Activated CD4-positive, alpha-beta memory T cell treated with anti-CD3 and anti-CD28 coated beads for 36 hours (primary cell): ENCODE measurements at regions of chr15 and their contacts with region 1.

Region 1: DNA sequence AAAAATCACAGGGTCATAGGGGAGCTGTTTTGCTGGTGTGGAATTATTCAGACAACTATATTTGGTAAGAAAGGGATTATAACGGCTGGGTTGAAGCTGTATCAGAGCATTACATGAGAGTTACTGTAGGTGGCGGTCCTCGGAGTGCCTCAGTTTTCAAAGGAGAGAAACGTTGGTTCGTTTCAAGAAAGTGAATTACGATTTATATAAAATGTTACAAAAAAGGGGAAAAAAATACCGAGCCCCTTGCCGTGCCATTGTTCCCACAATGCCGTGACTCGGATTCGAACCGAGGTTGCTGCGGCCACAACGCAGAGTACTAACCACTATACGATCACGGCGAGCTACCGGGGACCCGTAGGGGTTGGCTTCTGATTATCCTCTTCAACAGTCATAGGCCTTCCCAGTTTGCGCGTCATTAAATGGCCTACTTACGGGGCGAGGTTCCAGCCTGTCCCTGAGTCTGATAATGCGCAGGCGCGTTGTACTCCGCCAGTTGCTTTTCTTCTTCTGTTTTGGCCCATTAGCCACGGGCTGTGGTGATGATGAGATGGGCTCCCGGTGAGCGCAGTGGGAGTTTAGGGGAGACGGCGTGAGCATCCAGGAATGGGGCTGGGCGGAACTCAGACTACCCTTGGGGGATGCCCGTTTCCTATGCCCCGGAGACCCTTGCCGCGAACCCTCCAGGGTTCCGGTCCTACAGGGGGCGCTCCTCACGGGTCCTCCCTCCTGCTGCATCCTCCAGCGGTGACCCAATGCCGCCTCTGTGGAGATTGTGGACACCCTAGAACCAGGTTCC is 10.8 kb upstream of the SHF start:
- DNase-seq: peak; percentile 98
- H3K4me3 Mint-ChIP-seq: no peak overlapping the region
- H3K27ac Mint-ChIP-seq: no peak overlapping the region
- H3K4me1 Mint-ChIP-seq: peaks cover 13% of the 10 kb centered on the region
- H3K27me3 Mint-ChIP-seq: peaks cover 3% of the 10 kb centered on the region

Region 2: GRCh38 chr15:45118131-45118588 is 80.4 kb before region 1 on chr15:
- CTCF ChIA-PET with region 1: interaction called, 6 read pairs
- POLR2A ChIA-PET with region 1: no interaction called
- intact Hi-C with region 1: loop called (anchors 2 kb)
- DNase-seq: peak; percentile 91
- H3K4me3 Mint-ChIP-seq: no peak overlapping the region
- H3K27ac Mint-ChIP-seq: no peak overlapping the region
- H3K4me1 Mint-ChIP-seq: peaks cover 26% of the 10 kb centered on the region
- H3K27me3 Mint-ChIP-seq: peaks cover 57% of the 10 kb centered on the region

Region 3: GRCh38 chr15:45166834-45167630 is 31.5 kb before region 1 on chr15:
- CTCF ChIA-PET with region 1: interaction called, 48 read pairs
- POLR2A ChIA-PET with region 1: interaction called, 7 read pairs
- intact Hi-C with region 1: loop called (anchors 1 kb)
- DNase-seq: peak; percentile 92
- H3K4me3 Mint-ChIP-seq: peak overlapping the region; percentile 62
- H3K27ac Mint-ChIP-seq: peak overlapping the region; percentile 77
- H3K4me1 Mint-ChIP-seq: peaks cover 13% of the 10 kb centered on the region
- H3K27me3 Mint-ChIP-seq: no peaks in the 10 kb centered on the region

Region 4: DNA sequence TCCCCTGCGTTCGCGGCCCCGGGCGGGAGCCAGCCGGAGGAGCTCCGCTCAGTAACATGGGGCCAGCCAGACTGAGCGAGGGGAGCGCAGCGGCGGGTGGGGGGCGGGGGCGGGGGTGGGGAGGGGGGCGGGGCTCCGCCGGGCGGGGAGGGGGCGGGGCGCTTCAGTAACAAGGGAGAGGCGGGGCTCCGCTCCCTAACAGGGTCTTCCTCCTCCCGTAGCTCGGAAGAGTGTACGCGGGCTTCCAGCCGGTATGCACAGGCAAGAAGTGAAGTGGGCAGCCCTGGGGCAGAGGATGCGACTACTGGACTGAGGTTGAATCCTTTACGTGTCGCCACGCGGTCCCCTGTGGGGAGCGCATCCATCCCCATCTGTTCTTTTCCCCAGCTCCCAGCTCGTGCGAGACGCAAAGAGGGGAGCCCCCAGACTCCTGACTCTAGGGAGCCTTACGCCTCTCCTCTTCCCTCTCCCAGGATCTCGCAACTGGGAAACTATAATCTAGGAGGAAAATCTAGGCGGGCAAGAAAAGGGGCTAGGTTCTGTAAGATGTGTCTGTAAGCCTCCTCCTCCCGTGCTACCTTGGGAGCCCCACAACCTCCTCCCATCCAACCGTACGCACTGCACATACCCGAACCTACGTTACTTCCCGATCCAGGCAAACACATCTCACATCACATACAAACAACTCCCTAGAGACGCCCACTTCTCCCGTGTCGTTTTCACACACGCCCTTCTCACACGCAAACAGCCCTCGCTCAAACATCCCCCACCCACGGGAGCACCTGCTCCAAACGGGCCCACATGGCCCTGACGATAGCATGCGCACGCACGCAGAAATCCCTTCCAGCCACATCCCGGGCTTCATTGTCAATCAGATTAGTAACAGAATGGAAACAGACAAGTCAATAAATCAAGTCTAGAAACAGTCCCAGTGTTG is 10.4 kb before region 1 on chr15 and contains the start of gene SHF:
- CTCF ChIA-PET with region 1: interaction called, 17 read pairs
- POLR2A ChIA-PET with region 1: interaction called, 9 read pairs
- intact Hi-C with region 1: loop called (anchors 1 kb)
- DNase-seq: peak; percentile 84
- H3K4me3 Mint-ChIP-seq: peak within 1 kb of the TSS; percentile 76
- H3K27ac Mint-ChIP-seq: peak within 1 kb of the TSS; percentile 82
- H3K4me1 Mint-ChIP-seq: peaks cover 28% of the 10 kb centered on the region
- H3K27me3 Mint-ChIP-seq: no peaks in the 10 kb centered on the region
- total RNA-seq, gene SHF: 11.8 to 12.5 TPM

Region 5: GRCh38 chr15:45587095-45587860 is 388.7 kb after region 1 on chr15 and contains the start of gene BLOC1S6:
- CTCF ChIA-PET with region 1: no interaction called
- POLR2A ChIA-PET with region 1: interaction called, 5 read pairs
- intact Hi-C with region 1: loop called (anchors 1 kb)
- DNase-seq: peak; percentile 92
- H3K4me3 Mint-ChIP-seq: peak within 1 kb of the TSS; percentile 99
- H3K27ac Mint-ChIP-seq: peak within 1 kb of the TSS; percentile 100
- H3K4me1 Mint-ChIP-seq: peaks cover 38% of the 10 kb centered on the region
- H3K27me3 Mint-ChIP-seq: no peaks in the 10 kb centered on the region
- total RNA-seq, gene BLOC1S6: 48.5 to 49.4 TPM